Heart left ventricle (tissue), 16 donors: ENCODE measurements at regions of chr10 and their contacts with region 1.

Region 1: GRCh38 chr10:62804356-62805230 is at the start of gene ADO:
- DNase-seq: peak; percentile 86 to 93 (median 88)
- ATAC-seq: peak; percentile 94 to 97 (median 95)
- H3K4me3 ChIP-seq: peak within 1 kb of the TSS; percentile 65 to 93 (median 80)
- H3K27ac ChIP-seq: peak within 1 kb of the TSS; percentile 92 to 99 (median 96)
- H3K4me1 ChIP-seq: peaks cover 0 to 48% (median 30%) of the 10 kb centered on the region in 12 donors
- H3K27me3 ChIP-seq: no peaks in the 10 kb centered on the region
- CTCF ChIP-seq: no peak
- POLR2A ChIP-seq: peak in 1 of 2 donors; percentile 47
- total RNA-seq, gene ADO: 18.3 to 35.5 (median 19.7) TPM

Region 2: GRCh38 chr10:62637249-62638061 is 167.1 kb before region 1 on chr10:
- intact Hi-C with region 1: loop called in 1 of 10 experiments (anchors 10 kb)
- DNase-seq: peak in 2 of 5 donors; percentile 29 to 36
- ATAC-seq: peak; percentile 40 to 70 (median 54)
- H3K4me3 ChIP-seq: peak overlapping the region in 9 of 12 donors; percentile 15 to 38 (median 22)
- H3K27ac ChIP-seq: peak overlapping the region; percentile 6 to 93 (median 49)
- H3K4me1 ChIP-seq: peaks cover 0 to 83% (median 15%) of the 10 kb centered on the region in 12 donors
- H3K27me3 ChIP-seq: no peaks in the 10 kb centered on the region
- CTCF ChIP-seq: no peak
- POLR2A ChIP-seq: no peak

Region 3: DNA sequence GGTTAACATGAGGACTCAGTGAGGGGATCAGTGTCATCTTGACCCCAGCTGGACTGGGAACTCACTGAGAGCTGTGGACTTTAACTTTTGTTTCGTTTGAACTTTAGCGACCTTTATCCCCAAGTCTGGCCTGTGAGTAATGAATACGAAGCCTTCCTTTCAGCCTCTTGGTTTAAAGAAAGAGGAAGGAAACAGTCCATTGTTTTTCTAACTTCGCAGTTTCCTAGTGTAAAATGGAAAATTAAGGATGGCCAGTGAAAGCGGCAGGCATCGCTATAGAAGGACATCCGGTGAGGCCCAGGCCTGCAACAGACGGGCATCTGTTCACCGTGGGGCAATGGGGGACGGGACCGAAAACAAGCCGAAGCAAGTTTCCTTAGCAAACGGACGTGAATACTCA is 44.2 kb before region 1 on chr10:
- intact Hi-C with region 1: loop called in 5 of 10 experiments (anchors 2 to 5 kb)
- DNase-seq: peak in 4 of 5 donors; percentile 42 to 59 (median 46)
- ATAC-seq: peak in 2 of 4 donors; percentile 38 to 66
- H3K4me3 ChIP-seq: no peak overlapping the region
- H3K27ac ChIP-seq: peak overlapping the region in 10 of 12 donors; percentile 5 to 87 (median 54)
- H3K4me1 ChIP-seq: peaks cover 0 to 39% (median 16%) of the 10 kb centered on the region in 12 donors
- H3K27me3 ChIP-seq: no peaks in the 10 kb centered on the region
- CTCF ChIP-seq: no peak
- POLR2A ChIP-seq: no peak